Natural killer cell (primary cell): ENCODE measurements at regions of chr10 and their contacts with region 1.

Region 1: DNA sequence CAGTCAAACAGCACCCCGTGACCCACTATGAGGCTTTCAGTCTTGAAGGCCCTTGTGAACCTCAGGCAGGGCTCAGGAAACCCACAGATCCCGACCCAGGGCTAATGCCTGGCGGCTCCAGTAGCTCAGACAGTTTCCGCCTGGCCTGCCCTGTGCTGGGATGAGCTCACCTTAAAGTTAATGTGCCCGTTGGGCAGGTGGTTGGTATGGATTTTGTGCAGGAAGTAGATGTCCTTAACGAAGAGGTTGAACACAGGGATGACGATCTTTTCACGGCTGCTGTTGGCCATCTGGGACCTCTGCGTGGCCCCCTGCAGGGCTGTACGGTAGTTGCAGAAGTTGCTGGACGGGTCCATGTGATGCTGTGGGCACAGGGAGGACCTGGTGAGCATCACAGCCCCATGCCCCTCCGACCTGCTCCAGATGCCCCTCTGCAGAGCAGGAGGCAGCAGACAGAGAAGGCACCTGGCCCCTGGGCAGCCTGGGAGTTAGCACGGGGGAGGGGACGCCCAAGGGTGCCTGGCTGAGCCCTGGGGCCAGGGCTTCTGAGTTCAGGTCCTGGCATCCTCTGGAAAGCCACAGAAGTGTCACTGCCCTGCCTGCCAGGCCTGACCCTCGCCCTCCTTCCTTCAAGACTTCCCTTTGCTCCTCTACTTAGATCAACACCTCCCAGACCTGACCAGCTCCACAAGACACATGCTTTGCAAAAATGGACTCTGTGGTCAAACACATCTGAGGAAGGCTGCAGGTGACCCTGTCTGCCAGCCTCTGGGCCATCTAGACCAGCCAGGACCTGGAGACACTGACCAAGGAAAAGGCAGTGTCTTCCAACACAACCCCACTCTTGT is 59.8 kb downstream of the CSGALNACT2 start:
- DNase-seq: peak in 1 of 2 donors; percentile 27
- ATAC-seq: no peak
- H3K4me3 ChIP-seq: no peak overlapping the region
- H3K4me3 Mint-ChIP-seq: no peak overlapping the region
- H3K27ac ChIP-seq: no peak overlapping the region
- H3K27ac Mint-ChIP-seq: no peak overlapping the region
- H3K4me1 ChIP-seq: peaks cover 16% of the 10 kb centered on the region
- H3K4me1 Mint-ChIP-seq: peaks cover 6% of the 10 kb centered on the region in 2 donors
- H3K27me3 ChIP-seq: no peaks in the 10 kb centered on the region
- H3K27me3 Mint-ChIP-seq: no peaks in the 10 kb centered on the region
- CTCF ChIP-seq: no peak

Region 2: DNA sequence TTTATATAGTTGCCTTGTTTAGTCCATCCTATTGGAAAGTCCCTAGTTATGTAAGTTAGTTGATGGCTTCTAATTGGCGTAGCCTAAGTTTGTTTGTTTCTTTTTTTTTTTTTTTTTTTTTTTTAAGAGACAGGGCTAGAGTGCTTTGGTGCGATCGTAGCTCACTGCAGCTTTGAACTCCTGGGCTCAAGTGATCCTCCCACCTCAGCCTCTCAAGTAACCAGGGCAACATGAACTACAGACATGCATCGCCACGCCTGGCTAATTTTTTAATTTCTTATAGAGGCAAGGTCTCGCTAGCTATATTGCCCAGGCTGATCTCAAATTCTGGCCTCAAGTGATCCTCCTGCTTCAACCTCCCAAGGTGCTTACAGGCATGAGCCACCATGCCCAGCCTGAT is 52.7 kb before region 1 on chr10:
- intact Hi-C with region 1: loop called (anchors 10 kb)
- DNase-seq: peak in 1 of 2 donors; percentile 29
- ATAC-seq: no peak
- H3K4me3 ChIP-seq: no peak overlapping the region
- H3K4me3 Mint-ChIP-seq: no peak overlapping the region
- H3K27ac ChIP-seq: no peak overlapping the region
- H3K27ac Mint-ChIP-seq: peak overlapping the region; percentile 41 to 84
- H3K4me1 ChIP-seq: peaks cover 20% of the 10 kb centered on the region
- H3K4me1 Mint-ChIP-seq: peaks cover 77 to 82% of the 10 kb centered on the region in 2 donors
- H3K27me3 ChIP-seq: no peaks in the 10 kb centered on the region
- H3K27me3 Mint-ChIP-seq: no peaks in the 10 kb centered on the region
- CTCF ChIP-seq: no peak